CD8-positive, alpha-beta T cell (primary cell): ENCODE measurements at regions of chr7 and their contacts with region 1.

Region 1: DNA sequence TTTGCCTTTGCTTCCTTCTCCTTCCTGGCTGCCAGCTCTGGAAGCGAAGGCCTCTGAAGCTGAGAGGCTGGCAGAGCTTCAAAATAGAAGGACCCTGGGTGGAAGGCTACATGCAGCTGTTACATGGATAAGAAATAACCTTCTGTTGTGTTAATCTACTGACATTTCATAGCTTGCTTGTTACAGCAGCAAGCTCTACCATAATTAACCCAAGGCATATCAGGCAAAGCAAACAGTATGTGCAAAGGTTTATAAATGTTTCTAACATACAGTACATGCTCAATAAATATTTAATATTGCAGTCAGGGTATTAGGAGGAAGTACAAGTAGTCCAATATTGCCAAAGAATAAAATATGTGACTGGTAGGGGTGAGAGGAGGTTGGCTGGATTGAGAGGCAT is 55.6 kb upstream of the MKLN1 start:
- DNase-seq: no peak
- ATAC-seq: no peak
- H3K4me3 ChIP-seq: no peak overlapping the region
- H3K4me3 Mint-ChIP-seq: no peak overlapping the region
- H3K27ac ChIP-seq: no peak overlapping the region
- H3K27ac Mint-ChIP-seq: no peak overlapping the region
- H3K4me1 ChIP-seq: no peaks in the 10 kb centered on the region
- H3K4me1 Mint-ChIP-seq: no peaks in the 10 kb centered on the region
- H3K27me3 ChIP-seq: no peaks in the 10 kb centered on the region
- H3K27me3 Mint-ChIP-seq: no peaks in the 10 kb centered on the region
- CTCF ChIP-seq: no peak

Region 2: GRCh38 chr7:131238347-131238931 is 33.6 kb before region 1 on chr7:
- CTCF ChIA-PET with region 1: no interaction called
- POLR2A ChIA-PET with region 1: no interaction called
- intact Hi-C with region 1: loop called in 1 of 2 experiments (anchors 2 kb)
- DNase-seq: peak in 2 of 9 experiments; percentile 48 to 63
- ATAC-seq: peak; percentile 26
- H3K4me3 ChIP-seq: no peak overlapping the region
- H3K4me3 Mint-ChIP-seq: no peak overlapping the region
- H3K27ac ChIP-seq: peak overlapping the region in 1 of 2 experiments; percentile 45
- H3K27ac Mint-ChIP-seq: peak overlapping the region; percentile 69
- H3K4me1 ChIP-seq: peaks cover 14% of the 10 kb centered on the region
- H3K4me1 Mint-ChIP-seq: peaks cover 29% of the 10 kb centered on the region
- H3K27me3 ChIP-seq: no peaks in the 10 kb centered on the region
- H3K27me3 Mint-ChIP-seq: no peaks in the 10 kb centered on the region
- CTCF ChIP-seq: no peak